CD4-positive, alpha-beta memory T cell (primary cell): ENCODE measurements at regions of chr12 and their contacts with region 1.

Region 1: DNA sequence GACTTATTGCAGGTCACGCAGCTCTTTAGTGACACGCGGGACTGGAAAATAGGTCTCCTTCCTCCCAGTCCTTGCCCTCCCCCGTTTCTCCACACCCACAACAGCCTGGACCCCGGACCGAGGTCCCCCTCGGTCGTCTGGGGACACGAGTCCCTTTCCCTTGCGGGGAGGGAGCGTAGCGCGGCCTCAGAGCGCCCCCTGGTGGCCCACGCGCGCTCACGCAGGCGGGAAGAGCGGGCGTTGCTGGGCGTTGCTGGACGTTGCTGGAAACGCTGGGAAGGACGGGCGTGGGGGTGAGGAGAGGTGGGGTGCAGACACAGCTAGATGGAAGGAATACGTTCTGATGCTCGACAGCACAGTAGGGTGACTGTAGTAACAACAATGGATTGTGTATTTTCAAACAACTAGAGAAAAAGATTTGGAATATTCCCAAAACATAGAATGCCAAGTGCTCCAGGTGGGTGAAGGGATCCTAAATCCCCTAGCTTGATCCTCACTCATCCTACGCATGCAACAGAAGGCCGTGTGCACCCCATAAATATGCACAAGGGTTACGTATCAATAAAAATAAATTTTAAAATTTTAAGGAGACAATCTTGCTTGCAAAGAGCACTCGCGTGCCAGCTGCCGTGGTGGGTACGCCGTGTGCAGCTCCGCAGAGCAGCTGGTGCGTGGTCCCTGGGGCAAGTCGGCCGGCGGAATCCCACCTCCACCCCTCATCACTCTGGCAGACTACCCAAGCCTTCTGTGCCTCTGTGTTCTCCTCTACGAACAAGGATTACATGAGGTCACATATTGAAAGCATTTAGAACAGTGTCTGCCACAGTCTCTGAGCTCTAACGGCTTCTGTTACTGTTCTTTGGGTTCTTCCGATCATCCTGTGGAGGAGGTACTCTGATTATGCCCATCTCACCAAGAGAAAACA is 87.4 kb downstream of the B4GALNT3 start:
- DNase-seq: peak in 4 of 5 donors; percentile 52 to 70 (median 60)
- H3K4me3 ChIP-seq: no peak overlapping the region
- H3K4me3 Mint-ChIP-seq: peak overlapping the region in 1 of 8 donors; percentile 5
- H3K27ac ChIP-seq: no peak overlapping the region
- H3K27ac Mint-ChIP-seq: peak overlapping the region in 2 of 7 donors; percentile 42
- H3K4me1 ChIP-seq: peaks cover 14% of the 10 kb centered on the region
- H3K4me1 Mint-ChIP-seq: peaks cover 12 to 28% (median 21%) of the 10 kb centered on the region in 4 donors
- H3K27me3 ChIP-seq: no peaks in the 10 kb centered on the region
- H3K27me3 Mint-ChIP-seq: peaks cover 5 to 8% of the 10 kb centered on the region in 2 donors

Region 2: GRCh38 chr12:442235-442884 is 104.8 kb before region 1 on chr12:
- CTCF ChIA-PET with region 1: interaction called, 72 read pairs
- POLR2A ChIA-PET with region 1: no interaction called
- intact Hi-C with region 1: loop called (anchors 1 kb)
- DNase-seq: peak in 4 of 5 donors; percentile 31 to 48 (median 42)
- H3K4me3 ChIP-seq: no peak overlapping the region
- H3K4me3 Mint-ChIP-seq: no peak overlapping the region
- H3K27ac ChIP-seq: no peak overlapping the region
- H3K27ac Mint-ChIP-seq: no peak overlapping the region
- H3K4me1 ChIP-seq: no peaks in the 10 kb centered on the region
- H3K4me1 Mint-ChIP-seq: peaks cover 0 to 2% (median under 1%) of the 10 kb centered on the region in 4 donors
- H3K27me3 ChIP-seq: no peaks in the 10 kb centered on the region
- H3K27me3 Mint-ChIP-seq: peaks cover 2 to 3% of the 10 kb centered on the region in 2 donors

Region 3: DNA sequence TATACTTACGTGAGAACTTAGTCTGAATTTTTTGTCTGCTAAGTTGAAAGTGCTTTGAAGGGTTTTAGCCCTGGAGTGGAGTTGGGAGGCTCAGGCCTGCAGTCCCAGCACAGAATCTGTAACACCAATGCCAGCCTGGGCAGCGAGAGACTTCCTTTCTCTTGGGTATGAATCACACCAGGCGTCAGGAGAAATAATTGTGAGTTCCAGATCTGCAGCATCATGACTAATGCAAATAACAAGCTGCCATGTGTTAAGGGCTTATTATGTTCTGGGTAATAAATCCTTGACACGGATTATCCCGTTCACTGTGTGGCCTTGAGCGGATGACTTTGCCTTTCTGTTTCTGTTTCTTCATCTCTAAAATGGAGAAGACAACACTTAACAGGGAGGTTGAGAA is 16.9 kb before region 1 on chr12:
- CTCF ChIA-PET with region 1: interaction called, 41 read pairs
- POLR2A ChIA-PET with region 1: no interaction called
- intact Hi-C with region 1: no loop called
- DNase-seq: no peak
- H3K4me3 ChIP-seq: no peak overlapping the region
- H3K4me3 Mint-ChIP-seq: no peak overlapping the region
- H3K27ac ChIP-seq: no peak overlapping the region
- H3K27ac Mint-ChIP-seq: no peak overlapping the region
- H3K4me1 ChIP-seq: no peaks in the 10 kb centered on the region
- H3K4me1 Mint-ChIP-seq: no peaks in the 10 kb centered on the region
- H3K27me3 ChIP-seq: no peaks in the 10 kb centered on the region
- H3K27me3 Mint-ChIP-seq: peaks cover 0 to 3% of the 10 kb centered on the region in 2 donors

Region 4: DNA sequence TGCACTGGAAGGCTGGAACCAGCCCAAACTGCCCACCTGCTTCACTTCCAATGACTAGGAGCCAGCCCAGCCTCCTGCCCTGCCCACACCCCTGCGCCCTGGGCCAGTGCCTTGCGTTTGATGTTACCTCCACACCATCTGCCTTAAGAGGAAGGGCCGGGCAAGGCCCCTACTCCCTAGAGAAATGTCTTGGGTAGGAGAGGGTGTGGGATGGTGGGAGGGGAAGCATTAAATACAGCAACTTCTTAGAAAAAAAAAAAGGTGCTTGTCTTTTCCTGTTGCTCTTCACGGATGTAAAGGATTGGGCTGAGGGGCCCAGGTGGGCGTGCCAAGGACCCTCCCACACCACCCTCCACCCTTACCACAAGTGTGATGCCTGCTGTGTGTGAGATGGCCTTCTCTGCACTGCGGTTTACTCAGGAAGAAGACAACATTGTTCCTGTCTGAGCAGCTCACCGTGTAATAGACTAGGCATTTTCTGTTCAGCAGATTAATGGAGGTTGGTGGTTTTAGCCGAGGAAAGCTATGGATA is 16.1 kb after region 1 on chr12:
- CTCF ChIA-PET with region 1: interaction called, 31 read pairs
- POLR2A ChIA-PET with region 1: no interaction called
- intact Hi-C with region 1: no loop called
- DNase-seq: peak; percentile 74 to 81 (median 78)
- H3K4me3 ChIP-seq: peak overlapping the region; percentile 44 to 51
- H3K4me3 Mint-ChIP-seq: peak overlapping the region; percentile 79 to 93 (median 86)
- H3K27ac ChIP-seq: peak overlapping the region; percentile 71
- H3K27ac Mint-ChIP-seq: peak overlapping the region; percentile 88 to 97 (median 93)
- H3K4me1 ChIP-seq: peaks cover 60% of the 10 kb centered on the region
- H3K4me1 Mint-ChIP-seq: peaks cover 55 to 83% (median 69%) of the 10 kb centered on the region in 4 donors
- H3K27me3 ChIP-seq: no peaks in the 10 kb centered on the region
- H3K27me3 Mint-ChIP-seq: no peaks in the 10 kb centered on the region